ENCODE measurements at regions of chr11 and their contacts with region 1.

Region 1: DNA sequence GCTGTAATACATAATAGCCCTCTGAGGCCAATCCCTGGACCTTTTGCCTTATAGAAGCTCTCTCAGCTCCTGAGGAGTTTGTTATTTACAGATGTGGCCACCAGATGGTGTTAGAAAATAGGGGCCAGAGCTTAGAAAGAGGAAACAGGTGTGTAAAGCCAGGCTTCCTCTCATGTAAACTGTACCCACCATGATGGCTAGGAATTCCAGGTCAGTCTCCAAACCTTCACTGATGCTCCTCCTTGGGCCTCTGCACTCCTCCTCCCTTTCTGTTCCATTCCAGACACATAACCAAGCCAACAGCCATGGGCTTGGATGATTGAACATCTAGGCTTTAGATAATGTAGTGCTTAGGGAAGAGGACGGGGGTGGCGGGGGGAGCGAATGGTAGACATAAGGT is 39.7 kb downstream of the USP35 start:
- DNase-seq: peak; percentile 72
- H3K4me3 ChIP-seq: no peak overlapping the region
- H3K27ac ChIP-seq: peak overlapping the region in 1 of 2 experiments; percentile 19; a peak in 2 of 4 replicates
- H3K4me1 ChIP-seq: peaks cover 0 to 21% of the 10 kb centered on the region in 2 experiments; a peak in 2 of 4 replicates
- H3K27me3 ChIP-seq: no peaks in the 10 kb centered on the region
- CTCF ChIP-seq: peak; percentile 60
- EP300 ChIP-seq: no peak
- RAD21 ChIP-seq: peak; percentile 92

Region 2: DNA sequence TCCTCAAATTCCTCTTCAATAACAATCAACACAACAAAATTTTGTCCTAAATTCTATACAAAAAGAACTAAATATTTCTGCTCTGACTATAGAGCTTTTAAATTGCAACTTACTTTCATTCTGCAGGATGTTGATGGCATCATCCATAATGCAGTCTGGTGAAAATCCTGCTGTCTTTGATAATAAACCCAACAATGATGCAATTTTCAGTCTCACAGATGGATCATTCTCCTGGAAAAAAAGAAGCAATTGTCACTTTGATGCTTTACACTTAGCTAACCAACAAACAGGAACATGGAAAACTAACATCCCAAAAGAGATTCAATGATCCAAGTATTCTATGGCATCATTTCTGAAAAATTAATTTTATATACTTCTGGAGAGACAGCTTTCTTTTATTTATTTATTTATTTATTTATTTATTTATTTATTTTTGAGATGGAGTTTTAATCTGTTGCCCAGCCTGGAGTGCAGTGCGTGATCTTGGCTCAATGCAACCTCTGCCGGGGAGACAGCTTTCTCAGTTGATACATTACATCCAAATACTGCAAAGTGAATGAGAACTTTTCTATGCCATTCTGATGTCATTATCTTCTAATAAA is 247.0 kb before region 1 on chr11:
- CTCF ChIA-PET with region 1: no interaction called
- POLR2A ChIA-PET with region 1: no interaction called
- DNase-seq: no peak
- H3K4me3 ChIP-seq: no peak overlapping the region
- H3K27ac ChIP-seq: no peak overlapping the region
- H3K4me1 ChIP-seq: no peaks in the 10 kb centered on the region
- H3K27me3 ChIP-seq: no peaks in the 10 kb centered on the region
- CTCF ChIP-seq: no peak
- EP300 ChIP-seq: no peak
- RAD21 ChIP-seq: no peak

Region 3: DNA sequence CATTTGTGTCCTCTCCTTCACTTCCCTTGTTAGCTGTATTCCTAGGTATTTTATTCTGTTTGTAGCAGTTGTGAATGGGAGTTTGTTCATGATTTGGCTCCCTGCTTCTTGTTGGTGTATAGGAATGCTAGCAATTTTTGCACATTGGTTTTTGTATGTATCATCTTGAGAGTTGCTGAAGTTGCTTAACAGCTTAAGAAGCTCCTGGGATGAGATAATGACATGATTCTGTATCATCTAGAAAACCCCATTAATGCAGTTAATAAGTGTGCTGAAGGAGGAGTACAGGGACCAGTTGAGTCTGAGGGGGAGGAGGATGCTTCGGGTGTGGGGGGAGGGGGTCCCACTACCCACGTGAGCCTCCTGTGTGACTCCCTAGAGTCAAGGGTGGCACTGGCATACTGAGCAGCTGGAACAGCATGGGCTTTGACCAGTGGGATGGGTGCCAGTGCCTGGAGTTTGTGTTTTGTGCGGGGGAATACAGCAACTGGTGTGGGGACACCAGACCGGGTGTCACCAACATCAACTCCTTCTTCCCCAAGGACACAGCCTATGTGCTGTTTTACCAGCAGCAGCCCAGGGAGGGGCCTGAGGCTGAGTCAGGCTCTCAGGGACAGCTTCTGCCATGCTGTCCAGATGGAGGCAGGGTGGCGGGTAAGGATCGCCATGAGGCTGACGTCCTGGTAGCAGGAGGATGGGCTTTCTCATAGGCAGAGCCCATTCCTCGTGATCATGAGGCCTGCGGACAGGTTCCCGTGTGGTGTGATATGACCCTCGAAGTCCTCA is 15.7 kb before region 1 on chr11:
- CTCF ChIA-PET with region 1: interaction called, 16 read pairs
- POLR2A ChIA-PET with region 1: no interaction called
- DNase-seq: no peak
- H3K4me3 ChIP-seq: no peak overlapping the region
- H3K27ac ChIP-seq: peak overlapping the region in 1 of 2 experiments; percentile 18; a peak in 1 of 4 replicates
- H3K4me1 ChIP-seq: peaks cover 0 to 13% of the 10 kb centered on the region in 2 experiments; a peak in 1 of 4 replicates
- H3K27me3 ChIP-seq: no peaks in the 10 kb centered on the region
- CTCF ChIP-seq: no peak
- EP300 ChIP-seq: no peak
- RAD21 ChIP-seq: no peak

Region 4: GRCh38 chr11:78239781-78240180 is 11.3 kb after region 1 on chr11:
- CTCF ChIA-PET with region 1: interaction called, 15 read pairs
- POLR2A ChIA-PET with region 1: no interaction called
- DNase-seq: no peak
- H3K4me3 ChIP-seq: no peak overlapping the region
- H3K27ac ChIP-seq: no peak overlapping the region
- H3K4me1 ChIP-seq: no peaks in the 10 kb centered on the region; a peak in 2 of 4 replicates
- H3K27me3 ChIP-seq: no peaks in the 10 kb centered on the region
- CTCF ChIP-seq: no peak
- EP300 ChIP-seq: no peak
- RAD21 ChIP-seq: no peak

Region 5: GRCh38 chr11:78370406-78371172 is 142.1 kb after region 1 on chr11:
- CTCF ChIA-PET with region 1: no interaction called
- POLR2A ChIA-PET with region 1: no interaction called
- DNase-seq: no peak
- H3K4me3 ChIP-seq: no peak overlapping the region
- H3K27ac ChIP-seq: peak overlapping the region in 1 of 2 experiments; percentile 61; a peak in 2 of 4 replicates
- H3K4me1 ChIP-seq: peaks cover 9 to 19% of the 10 kb centered on the region in 2 experiments; a peak in 3 of 4 replicates
- H3K27me3 ChIP-seq: no peaks in the 10 kb centered on the region
- CTCF ChIP-seq: no peak
- EP300 ChIP-seq: no peak
- RAD21 ChIP-seq: no peak